Mammary epithelial cell (primary cell): ENCODE measurements at regions of chr6 and their contacts with region 1.

Region 1: GRCh38 chr6:97322811-97323210 is 39.8 kb upstream of the MMS22L start:
- DNase-seq: peak; percentile 73
- H3K4me3 ChIP-seq: no peak overlapping the region
- H3K27ac ChIP-seq: no peak overlapping the region
- H3K4me1 ChIP-seq: peaks cover 13% of the 10 kb centered on the region
- H3K27me3 ChIP-seq: no peaks in the 10 kb centered on the region
- CTCF ChIP-seq: no peak

Region 2: GRCh38 chr6:96897383-96898240 is 425.2 kb before region 1 on chr6 and contains the start of gene NDUFAF4:
- CTCF ChIA-PET with region 1: no interaction called
- dilution Hi-C with region 1: no loop called
- in situ Hi-C with region 1: no loop called
- intact Hi-C with region 1: no loop called
- DNase-seq: peak; percentile 90
- H3K4me3 ChIP-seq: peak within 1 kb of the TSS; percentile 60 to 80 (median 74)
- H3K27ac ChIP-seq: peak within 1 kb of the TSS; percentile 48
- H3K4me1 ChIP-seq: peaks cover 18% of the 10 kb centered on the region
- H3K27me3 ChIP-seq: no peaks in the 10 kb centered on the region
- CTCF ChIP-seq: peak; percentile 62 to 92
- total RNA-seq, gene NDUFAF4: 8.5 to 48.8 TPM

Region 3: GRCh38 chr6:97240222-97240621 is 82.6 kb before region 1 on chr6:
- CTCF ChIA-PET with region 1: no interaction called
- dilution Hi-C with region 1: no loop called
- in situ Hi-C with region 1: no loop called
- intact Hi-C with region 1: no loop called
- DNase-seq: peak; percentile 59
- H3K4me3 ChIP-seq: no peak overlapping the region
- H3K27ac ChIP-seq: no peak overlapping the region
- H3K4me1 ChIP-seq: peaks cover 4% of the 10 kb centered on the region
- H3K27me3 ChIP-seq: no peaks in the 10 kb centered on the region
- CTCF ChIP-seq: no peak

Region 4: DNA sequence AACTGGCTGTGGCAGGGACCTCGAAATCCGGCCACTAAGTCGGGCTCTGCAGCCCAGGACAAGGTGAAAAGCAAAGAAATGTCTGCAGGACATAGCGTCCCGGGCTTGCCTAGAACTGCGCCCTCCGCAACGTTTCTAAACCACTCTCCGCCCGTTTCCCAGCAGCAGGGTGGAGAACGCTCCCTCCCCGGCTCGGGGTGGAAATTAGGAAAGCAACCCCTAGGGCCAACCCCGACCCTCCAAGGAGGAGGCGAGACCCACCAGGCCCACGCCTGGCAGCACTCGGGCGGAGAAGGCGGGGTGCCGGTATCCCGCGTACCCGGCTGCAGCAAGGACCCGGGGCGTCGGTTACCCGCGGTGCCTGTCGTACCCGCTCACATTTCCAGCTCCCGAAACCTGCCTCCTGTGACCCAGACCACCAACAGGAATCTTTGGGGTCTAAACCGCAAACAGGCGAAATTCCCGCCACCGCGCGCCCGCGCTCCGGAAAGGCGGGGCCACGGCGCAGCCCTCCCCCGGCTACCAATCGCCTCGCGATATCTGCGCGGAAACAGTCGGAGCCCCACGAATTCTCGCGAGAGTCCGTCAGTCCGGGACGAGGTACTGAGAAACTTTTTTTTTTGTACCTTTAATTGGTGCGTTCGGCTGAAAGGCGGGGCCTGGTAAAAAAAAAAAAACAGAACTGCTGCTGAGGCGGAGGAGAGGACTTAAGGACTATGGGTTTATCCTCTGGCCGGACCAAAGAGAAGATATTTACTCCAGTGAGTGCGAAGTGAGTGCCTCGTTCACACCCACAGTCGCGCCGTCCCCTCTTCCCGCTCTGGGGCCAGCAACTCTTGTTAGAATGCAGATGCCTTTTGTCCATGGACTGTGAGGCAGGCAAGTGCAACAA is 39.8 kb before region 1 on chr6 and contains the start of gene MMS22L:
- CTCF ChIA-PET with region 1: no interaction called
- dilution Hi-C with region 1: no loop called
- in situ Hi-C with region 1: no loop called
- intact Hi-C with region 1: loop called (anchors 5 kb)
- DNase-seq: peak; percentile 90
- H3K4me3 ChIP-seq: peak within 1 kb of the TSS; percentile 77 to 99 (median 94)
- H3K27ac ChIP-seq: peak within 1 kb of the TSS; percentile 77
- H3K4me1 ChIP-seq: no peaks in the 10 kb centered on the region
- H3K27me3 ChIP-seq: no peaks in the 10 kb centered on the region
- CTCF ChIP-seq: no peak
- total RNA-seq, gene MMS22L: 11.3 to 20.2 TPM